ENCODE measurements at regions of chr1 and their contacts with region 1.

Region 1: DNA sequence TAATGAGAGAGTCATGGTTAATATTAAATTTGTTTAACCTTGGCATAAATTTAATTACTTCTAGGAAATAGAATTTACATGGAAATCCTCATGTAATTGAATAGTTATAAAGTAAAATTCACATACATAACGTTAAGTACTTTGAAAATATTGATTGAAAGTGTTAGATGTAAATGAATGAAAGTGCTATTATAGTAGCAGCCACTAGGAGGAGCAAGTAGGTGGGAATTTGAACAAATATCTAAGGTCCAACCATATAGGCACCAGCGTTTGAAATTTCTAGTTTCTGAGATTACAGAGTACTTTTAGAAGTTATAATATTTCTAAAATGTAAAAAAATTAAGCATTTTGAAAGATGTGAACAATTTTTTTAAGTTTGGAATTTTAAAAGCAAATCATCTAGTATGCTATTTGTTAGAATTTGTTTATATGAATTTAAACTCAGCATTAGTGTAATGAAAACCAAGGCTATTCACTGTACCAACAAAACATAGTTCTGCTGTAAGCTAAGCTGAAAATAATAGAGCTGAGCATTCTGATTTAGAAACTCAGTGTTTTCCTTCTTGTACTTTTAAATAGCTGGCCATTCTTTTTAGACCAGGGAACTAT is 3.3 kb downstream of the B3GALT2 start:
- DNase-seq: peak; percentile 39
- H3K4me3 Mint-ChIP-seq: no peak overlapping the region
- H3K27ac Mint-ChIP-seq: no peak overlapping the region
- H3K4me1 Mint-ChIP-seq: peaks cover 28% of the 10 kb centered on the region
- H3K27me3 Mint-ChIP-seq: no peaks in the 10 kb centered on the region
- CTCF ChIP-seq: peak; percentile 65

Region 2: GRCh38 chr1:193216925-193217324 is 33.8 kb after region 1 on chr1:
- CTCF ChIA-PET with region 1: no interaction called
- intact Hi-C with region 1: no loop called
- DNase-seq: no peak
- H3K4me3 Mint-ChIP-seq: no peak overlapping the region
- H3K27ac Mint-ChIP-seq: no peak overlapping the region
- H3K4me1 Mint-ChIP-seq: no peaks in the 10 kb centered on the region
- H3K27me3 Mint-ChIP-seq: no peaks in the 10 kb centered on the region
- CTCF ChIP-seq: no peak

Region 3: DNA sequence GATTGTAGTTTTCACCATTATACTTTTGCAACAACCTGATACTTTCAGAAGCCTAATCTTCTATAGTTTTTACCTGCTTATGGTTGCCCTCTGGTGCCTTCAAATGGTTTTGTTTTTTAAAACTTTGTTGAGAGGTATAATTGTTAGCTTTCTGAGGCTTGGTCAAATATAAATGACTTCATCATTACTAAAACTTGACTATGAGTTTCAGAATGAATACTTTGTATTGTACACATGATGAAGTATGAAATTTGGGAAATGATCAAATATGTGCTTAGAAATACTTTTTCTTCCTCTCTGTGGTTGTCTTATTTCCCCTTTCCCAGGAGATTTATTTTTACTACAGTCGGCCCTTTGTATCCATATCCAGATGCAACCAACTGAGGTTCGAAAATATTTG is 155.1 kb after region 1 on chr1:
- CTCF ChIA-PET with region 1: no interaction called
- intact Hi-C with region 1: loop called (anchors 1 kb)
- DNase-seq: no peak
- H3K4me3 Mint-ChIP-seq: no peak overlapping the region
- H3K27ac Mint-ChIP-seq: no peak overlapping the region
- H3K4me1 Mint-ChIP-seq: peaks cover 29% of the 10 kb centered on the region
- H3K27me3 Mint-ChIP-seq: no peaks in the 10 kb centered on the region
- CTCF ChIP-seq: peak; percentile 24

Region 4: DNA sequence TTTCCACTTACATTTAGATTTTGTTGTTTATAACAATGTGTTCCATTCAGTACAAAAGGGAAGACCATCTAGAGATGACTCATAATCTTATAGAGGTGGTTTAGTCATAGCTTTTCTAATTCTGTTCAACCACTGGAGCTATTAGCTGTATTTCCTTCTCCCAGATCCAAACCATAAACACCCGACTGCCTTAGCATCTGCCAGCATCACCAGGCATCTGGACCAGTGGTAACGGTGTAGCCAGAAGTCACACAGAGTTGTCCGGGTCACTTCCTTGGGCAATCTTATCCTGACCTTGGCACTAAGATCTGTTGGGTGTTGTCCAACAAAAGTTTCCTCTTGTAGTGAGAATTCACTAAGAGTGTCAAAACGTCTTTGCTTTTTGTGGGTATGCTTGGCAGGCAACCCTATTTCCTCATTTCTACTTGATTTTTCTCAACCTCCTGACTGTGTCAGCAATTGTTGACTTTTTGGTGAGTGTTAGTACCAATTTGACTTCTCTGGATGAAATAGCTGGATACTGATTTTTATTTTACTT is 375.4 kb after region 1 on chr1:
- CTCF ChIA-PET with region 1: no interaction called
- intact Hi-C with region 1: loop called (anchors 10 kb)
- DNase-seq: peak; percentile 72
- H3K4me3 Mint-ChIP-seq: no peak overlapping the region
- H3K27ac Mint-ChIP-seq: peak overlapping the region; percentile 10
- H3K4me1 Mint-ChIP-seq: peaks cover 28% of the 10 kb centered on the region
- H3K27me3 Mint-ChIP-seq: no peaks in the 10 kb centered on the region
- CTCF ChIP-seq: no peak

Region 5: DNA sequence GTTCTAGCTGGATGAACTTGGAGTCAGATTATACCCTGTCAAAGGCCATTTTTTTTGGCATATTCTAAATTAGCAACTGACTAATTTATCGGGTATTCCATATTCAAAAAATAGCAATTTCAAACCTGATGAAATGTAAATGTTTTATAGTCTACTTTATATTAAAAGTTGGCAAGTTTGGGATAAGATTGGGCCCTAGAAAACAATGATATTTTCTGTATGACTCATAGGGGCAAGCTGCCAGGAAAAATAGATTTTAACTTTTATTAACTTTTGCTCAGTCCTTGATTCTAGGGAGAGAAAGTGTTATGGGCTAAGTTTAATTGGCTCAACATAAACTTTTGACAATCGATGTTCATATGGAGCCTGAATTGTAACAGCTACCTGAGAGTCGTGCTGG is 580.1 kb after region 1 on chr1:
- CTCF ChIA-PET with region 1: no interaction called
- intact Hi-C with region 1: loop called (anchors 10 kb)
- DNase-seq: no peak
- H3K4me3 Mint-ChIP-seq: no peak overlapping the region
- H3K27ac Mint-ChIP-seq: no peak overlapping the region
- H3K4me1 Mint-ChIP-seq: peaks cover 14% of the 10 kb centered on the region
- H3K27me3 Mint-ChIP-seq: no peaks in the 10 kb centered on the region
- CTCF ChIP-seq: no peak

Measured in Calu3 (cell line).